Panc1 (cell line): ENCODE measurements at regions of chr1 and their contacts with region 1.

Region 1: GRCh38 chr1:9624081-9624480 is 27.4 kb upstream of the PIK3CD start:
- DNase-seq: no peak
- ATAC-seq: no peak
- H3K4me3 ChIP-seq: no peak overlapping the region
- H3K27ac ChIP-seq: no peak overlapping the region
- H3K4me1 ChIP-seq: no peaks in the 10 kb centered on the region; the same call in 1 of the 2 replicates
- H3K27me3 ChIP-seq: no peaks in the 10 kb centered on the region
- CTCF ChIP-seq: no peak

Region 2: GRCh38 chr1:9676815-9677393 is 52.8 kb after region 1 on chr1:
- CTCF ChIA-PET with region 1: interaction called, 11 read pairs
- POLR2A ChIA-PET with region 1: no interaction called
- in situ Hi-C with region 1: no loop called
- intact Hi-C with region 1: no loop called
- DNase-seq: no peak
- ATAC-seq: peak; percentile 36; the same call in 1 of the 2 replicates
- H3K4me3 ChIP-seq: no peak overlapping the region
- H3K27ac ChIP-seq: no peak overlapping the region
- H3K4me1 ChIP-seq: peaks cover 3% of the 10 kb centered on the region; the same call in 1 of the 2 replicates
- H3K27me3 ChIP-seq: no peaks in the 10 kb centered on the region
- CTCF ChIP-seq: no peak